Esophagus muscularis mucosa (tissue), 4 donors: ENCODE measurements at regions of chr15 and their contacts with region 1.

Region 1: GRCh38 chr15:34621675-34622074 is 38.2 kb upstream of the GOLGA8B start:
- DNase-seq: no peak
- H3K4me3 ChIP-seq: no peak overlapping the region
- H3K27ac ChIP-seq: no peak overlapping the region
- H3K4me1 ChIP-seq: peaks cover 0 to 5% (median 0%) of the 10 kb centered on the region in 4 donors
- H3K27me3 ChIP-seq: peaks cover 0 to 22% (median 0%) of the 10 kb centered on the region in 4 donors
- CTCF ChIP-seq: peak in 1 of 3 experiments; percentile 30
- EP300 ChIP-seq: no peak
- POLR2A ChIP-seq: no peak

Region 2: DNA sequence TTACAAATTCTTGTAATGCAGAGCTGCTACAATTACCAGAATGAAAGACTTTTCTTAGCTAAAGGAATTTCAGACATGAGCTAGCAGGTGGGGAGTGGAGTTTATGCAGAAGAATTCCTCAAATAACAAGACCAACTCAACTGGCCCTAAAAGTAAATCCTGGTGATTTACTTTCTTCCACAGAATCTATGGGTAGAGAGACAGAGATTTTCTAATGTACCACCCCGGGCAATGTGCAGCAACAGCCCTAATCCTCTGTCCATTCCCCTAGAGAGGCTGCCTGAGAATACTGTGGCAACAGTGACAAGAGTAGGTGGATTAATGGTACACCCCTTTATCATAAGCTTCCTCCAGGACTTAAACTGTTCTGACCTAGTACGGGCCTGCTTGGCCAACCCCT is 292.6 kb after region 1 on chr15:
- intact Hi-C with region 1: loop called (anchors 10 kb)
- DNase-seq: no peak
- H3K4me3 ChIP-seq: no peak overlapping the region
- H3K27ac ChIP-seq: no peak overlapping the region
- H3K4me1 ChIP-seq: peaks cover 0 to 2% (median 0%) of the 10 kb centered on the region in 4 donors
- H3K27me3 ChIP-seq: no peaks in the 10 kb centered on the region
- CTCF ChIP-seq: no peak
- EP300 ChIP-seq: no peak
- POLR2A ChIP-seq: no peak